ENCODE measurements at regions of chr2 and their contacts with region 1.

Region 1: GRCh38 chr2:222318026-222318711 is 19.4 kb upstream of the PAX3 start:
- DNase-seq: peak; percentile 43
- H3K4me3 Mint-ChIP-seq: peak overlapping the region; percentile 78
- H3K27ac Mint-ChIP-seq: no peak overlapping the region
- H3K4me1 Mint-ChIP-seq: peaks cover 16% of the 10 kb centered on the region
- H3K27me3 Mint-ChIP-seq: peaks cover 71% of the 10 kb centered on the region

Region 2: GRCh38 chr2:222307143-222307756 is 10.9 kb before region 1 on chr2:
- CTCF ChIA-PET with region 1: interaction called, 10 read pairs
- POLR2A ChIA-PET with region 1: interaction called, 3 read pairs
- DNase-seq: no peak
- H3K4me3 Mint-ChIP-seq: no peak overlapping the region
- H3K27ac Mint-ChIP-seq: no peak overlapping the region
- H3K4me1 Mint-ChIP-seq: peaks cover 37% of the 10 kb centered on the region
- H3K27me3 Mint-ChIP-seq: peaks cover 95% of the 10 kb centered on the region

Region 3: DNA sequence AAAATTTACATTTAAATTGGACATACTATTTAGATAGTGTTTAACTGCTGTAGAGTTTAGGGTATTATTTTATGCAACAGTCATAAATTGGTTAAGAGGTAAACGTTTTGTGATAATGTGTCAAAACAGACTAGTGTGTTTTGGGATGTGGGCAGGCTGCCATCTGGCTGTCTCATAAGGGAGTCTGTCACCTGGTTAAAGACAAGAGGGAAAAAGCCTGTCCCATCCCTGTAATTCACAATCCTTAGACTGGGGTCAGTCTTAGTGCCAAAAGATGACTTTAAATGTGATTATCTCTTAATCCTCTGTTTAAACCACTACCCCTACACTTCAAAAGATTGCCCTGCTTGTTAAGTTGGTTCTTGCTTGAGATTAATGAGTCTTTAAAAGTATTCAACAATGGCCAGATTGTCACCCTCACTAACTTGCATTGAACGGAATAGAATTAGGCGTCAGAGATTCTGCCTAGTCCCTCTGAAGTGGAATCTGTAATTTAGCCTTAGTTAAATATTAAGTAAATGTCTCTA is 165.4 kb after region 1 on chr2:
- CTCF ChIA-PET with region 1: interaction called, 14 read pairs
- POLR2A ChIA-PET with region 1: no interaction called
- DNase-seq: no peak
- H3K4me3 Mint-ChIP-seq: no peak overlapping the region
- H3K27ac Mint-ChIP-seq: no peak overlapping the region
- H3K4me1 Mint-ChIP-seq: peaks cover 10% of the 10 kb centered on the region
- H3K27me3 Mint-ChIP-seq: no peaks in the 10 kb centered on the region

Region 4: GRCh38 chr2:222561817-222562645 is 243.9 kb after region 1 on chr2:
- CTCF ChIA-PET with region 1: interaction called, 45 read pairs
- POLR2A ChIA-PET with region 1: interaction called, 4 read pairs
- DNase-seq: peak; percentile 38
- H3K4me3 Mint-ChIP-seq: no peak overlapping the region
- H3K27ac Mint-ChIP-seq: no peak overlapping the region
- H3K4me1 Mint-ChIP-seq: no peaks in the 10 kb centered on the region
- H3K27me3 Mint-ChIP-seq: no peaks in the 10 kb centered on the region

Region 5: GRCh38 chr2:222613715-222614331 is 295.7 kb after region 1 on chr2:
- CTCF ChIA-PET with region 1: interaction called, 25 read pairs
- POLR2A ChIA-PET with region 1: no interaction called
- DNase-seq: no peak
- H3K4me3 Mint-ChIP-seq: no peak overlapping the region
- H3K27ac Mint-ChIP-seq: no peak overlapping the region
- H3K4me1 Mint-ChIP-seq: peaks cover 7% of the 10 kb centered on the region
- H3K27me3 Mint-ChIP-seq: no peaks in the 10 kb centered on the region